Right lobe of liver (tissue), 6 donors: ENCODE measurements at regions of chr2 and their contacts with region 1.

Region 1: GRCh38 chr2:70142590-70143313 is 48.1 kb downstream of the C2orf42 start:
- DNase-seq: peak; percentile 99
- ATAC-seq: peak; percentile 65 to 82 (median 79)
- H3K4me3 ChIP-seq: peak overlapping the region; percentile 16 to 46 (median 41)
- H3K27ac ChIP-seq: peak overlapping the region; percentile 100
- H3K4me1 ChIP-seq: peaks cover 0 to 19% (median 6%) of the 10 kb centered on the region in 4 donors
- H3K27me3 ChIP-seq: no peaks in the 10 kb centered on the region
- CTCF ChIP-seq: peak; percentile 96 to 100 (median 98)
- POLR2A ChIP-seq: no peak

Region 2: DNA sequence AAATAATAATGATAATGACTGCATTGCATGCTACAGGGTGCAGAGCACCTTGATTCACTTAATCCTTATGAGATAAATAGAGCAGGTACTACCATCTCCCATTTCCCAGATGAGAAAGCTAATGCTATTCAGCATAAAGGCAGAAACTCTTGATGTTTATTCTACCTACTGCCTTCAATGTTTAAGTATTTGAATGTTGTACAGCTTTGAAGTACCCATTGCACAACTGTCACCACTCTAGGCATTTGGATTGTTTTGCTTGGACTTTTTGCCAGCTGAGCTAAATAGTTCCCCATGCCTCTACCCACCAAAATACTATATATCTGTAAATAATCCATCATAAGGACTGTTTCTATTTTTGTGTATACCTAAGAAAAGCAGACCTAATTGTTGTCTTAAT is 235.5 kb before region 1 on chr2:
- intact Hi-C with region 1: loop called (anchors 5 kb)
- DNase-seq: no peak
- ATAC-seq: no peak
- H3K4me3 ChIP-seq: no peak overlapping the region
- H3K27ac ChIP-seq: no peak overlapping the region
- H3K4me1 ChIP-seq: no peaks in the 10 kb centered on the region
- H3K27me3 ChIP-seq: no peaks in the 10 kb centered on the region
- CTCF ChIP-seq: no peak
- POLR2A ChIP-seq: no peak

Region 3: DNA sequence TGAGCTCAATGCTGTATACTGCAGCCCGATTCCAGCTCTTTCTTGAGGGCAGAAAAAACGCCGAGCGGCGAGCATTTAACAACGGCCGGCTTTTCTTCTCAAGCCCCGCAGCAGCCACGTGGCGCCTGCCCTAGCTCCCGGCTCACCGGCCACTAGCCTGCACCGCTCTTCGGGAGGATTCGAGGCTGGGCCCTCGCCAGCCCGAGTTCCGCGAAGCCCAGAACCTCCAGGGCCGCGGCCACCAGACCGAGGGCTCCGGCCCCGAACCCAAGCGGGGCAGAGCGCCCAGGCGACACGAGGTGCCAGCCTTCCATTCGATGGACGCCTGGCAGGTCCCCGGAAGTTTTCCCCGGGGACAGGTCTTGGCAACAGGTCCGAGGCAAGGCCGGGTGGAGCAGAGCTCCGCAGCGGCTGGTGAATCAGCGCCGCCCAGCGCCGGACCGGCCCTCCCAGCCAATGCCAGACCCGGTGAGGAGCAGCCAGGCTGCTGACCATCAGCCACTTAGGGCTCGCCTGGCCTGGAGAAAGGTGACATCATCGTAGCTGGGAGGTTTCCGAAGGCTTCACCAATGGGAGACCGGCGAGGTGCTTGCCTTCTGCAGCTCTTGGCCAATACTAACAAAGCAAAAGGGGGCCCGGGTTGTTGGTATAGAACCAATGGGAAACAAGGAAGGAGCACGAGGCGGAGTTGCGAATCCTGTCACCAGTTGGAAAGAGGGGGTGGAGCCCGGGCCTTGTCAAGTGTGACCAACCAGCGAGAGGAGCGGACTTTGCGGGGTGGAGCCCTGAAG is 228.4 kb before region 1 on chr2:
- intact Hi-C with region 1: loop called (anchors 5 kb)
- DNase-seq: peak; percentile 98 to 100 (median 100)
- ATAC-seq: peak; percentile 85 to 95 (median 90)
- H3K4me3 ChIP-seq: peak overlapping the region; percentile 60 to 64 (median 62)
- H3K27ac ChIP-seq: peak overlapping the region; percentile 98 to 100 (median 100)
- H3K4me1 ChIP-seq: peaks cover 0 to 6% (median 3%) of the 10 kb centered on the region in 4 donors
- H3K27me3 ChIP-seq: no peaks in the 10 kb centered on the region
- CTCF ChIP-seq: peak; percentile 5 to 50 (median 28)
- POLR2A ChIP-seq: peak; percentile 88

Region 4: DNA sequence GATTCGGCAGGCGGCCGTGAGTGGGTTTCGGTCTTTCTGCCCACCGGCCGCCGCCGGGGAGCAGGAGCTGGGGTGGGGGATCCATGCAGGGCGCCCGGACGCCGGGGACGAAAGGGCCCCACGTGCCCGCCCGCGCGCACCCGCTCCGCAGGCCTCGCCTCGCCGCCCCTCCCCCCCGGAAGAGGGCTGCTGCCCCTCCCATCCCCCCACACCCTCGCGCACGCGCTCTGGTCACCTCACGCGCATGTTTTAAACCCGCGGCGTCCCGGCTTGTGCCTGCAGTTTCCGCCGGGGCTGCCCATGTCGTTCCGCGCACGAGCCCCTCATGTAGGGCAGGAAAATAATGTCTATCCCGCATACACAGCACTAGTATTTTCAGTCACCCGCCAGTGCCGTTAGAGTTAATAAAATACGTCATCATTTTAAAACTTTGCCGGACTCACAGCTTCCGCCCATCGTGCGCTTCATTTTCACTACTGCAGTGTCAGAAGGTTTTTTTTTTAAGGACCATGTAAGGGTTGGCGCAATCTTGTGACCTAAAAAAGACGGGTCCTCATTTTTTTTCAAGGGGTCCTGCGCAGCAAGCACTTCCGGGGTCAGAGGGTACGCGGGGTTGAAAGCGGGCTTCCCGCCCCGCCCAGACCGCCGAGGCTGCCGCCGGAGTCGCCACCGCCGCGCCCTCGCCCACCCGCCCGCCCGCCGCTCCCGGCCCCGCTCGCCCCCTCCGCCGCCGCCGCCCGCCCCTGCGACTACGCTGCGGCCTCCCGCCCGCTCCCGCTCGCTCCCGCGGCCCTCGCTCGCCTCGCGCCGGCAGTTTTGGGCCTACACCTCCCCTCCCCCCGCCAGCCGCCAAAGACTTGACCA is 55.7 kb before region 1 on chr2 and contains the start of gene PCBP1:
- intact Hi-C with region 1: loop called (anchors 2 to 5 kb)
- DNase-seq: peak; percentile 96 to 97 (median 96)
- ATAC-seq: peak; percentile 57 to 76 (median 72)
- H3K4me3 ChIP-seq: peak within 1 kb of the TSS; percentile 77 to 91 (median 81)
- H3K27ac ChIP-seq: peak within 1 kb of the TSS; percentile 100
- H3K4me1 ChIP-seq: peaks cover 0 to 39% (median 13%) of the 10 kb centered on the region in 4 donors
- H3K27me3 ChIP-seq: no peaks in the 10 kb centered on the region
- CTCF ChIP-seq: no peak
- POLR2A ChIP-seq: peak; percentile 83
- total RNA-seq, gene PCBP1: 147 to 220 (median 178) TPM

Region 5: DNA sequence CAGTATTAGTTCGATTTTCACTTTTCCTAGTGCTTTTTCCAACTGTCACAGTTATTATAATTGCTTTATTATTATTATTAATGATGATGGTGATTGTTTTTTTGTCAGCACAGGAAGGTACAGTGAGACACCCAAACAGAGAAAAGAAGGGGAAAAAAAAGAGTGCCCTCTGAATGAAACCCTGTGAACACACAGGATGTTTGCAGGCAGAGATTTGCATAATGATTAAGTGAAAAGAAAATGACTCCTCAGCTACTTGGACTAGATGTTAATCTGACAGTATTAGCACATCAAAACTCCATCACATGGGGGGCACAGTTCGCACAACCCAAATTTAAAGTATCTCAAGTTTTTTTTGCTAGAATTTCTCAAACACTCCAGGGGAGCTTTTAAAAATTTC is 592.3 kb after region 1 on chr2:
- intact Hi-C with region 1: no loop called
- DNase-seq: no peak
- ATAC-seq: no peak
- H3K4me3 ChIP-seq: no peak overlapping the region
- H3K27ac ChIP-seq: no peak overlapping the region
- H3K4me1 ChIP-seq: no peaks in the 10 kb centered on the region
- H3K27me3 ChIP-seq: no peaks in the 10 kb centered on the region
- CTCF ChIP-seq: no peak
- POLR2A ChIP-seq: no peak